Gastrocnemius medialis (tissue), 4 donors: ENCODE measurements at regions of chrX and their contacts with region 1.

Region 1: DNA sequence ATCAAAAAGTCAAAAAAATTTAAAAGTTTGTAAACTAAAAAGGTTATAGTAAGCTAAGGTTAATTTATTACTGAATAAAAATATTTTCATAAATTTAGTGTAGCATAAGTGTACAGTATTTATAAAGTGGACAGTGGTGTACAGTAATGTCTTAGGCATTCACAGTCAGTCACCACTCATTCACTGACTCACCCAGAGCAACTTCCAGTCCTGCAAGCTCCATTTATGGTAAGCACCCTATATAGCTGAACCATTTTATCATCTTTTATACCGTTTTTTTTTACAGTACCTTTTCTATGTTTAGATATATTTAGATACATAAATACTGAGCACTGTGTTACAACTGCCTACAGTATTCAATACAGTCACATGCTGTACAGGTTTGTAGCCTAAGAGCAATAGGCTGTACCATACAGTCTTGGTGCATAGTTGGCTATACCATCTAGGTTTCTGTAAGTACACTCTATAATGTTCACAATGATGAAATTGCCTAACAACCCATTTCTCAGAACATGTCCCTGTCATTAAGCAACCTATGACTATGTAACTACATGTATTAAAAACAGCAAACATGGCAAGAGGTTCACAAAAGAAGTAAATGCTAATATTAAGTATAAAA is 18.6 kb downstream of the ACSL4 start:
- DNase-seq: no peak
- ATAC-seq: no peak
- H3K4me3 ChIP-seq: no peak overlapping the region
- H3K27ac ChIP-seq: no peak overlapping the region
- H3K4me1 ChIP-seq: peaks cover 2 to 12% of the 10 kb centered on the region in 2 donors
- H3K27me3 ChIP-seq: peaks cover 0 to 4% (median 0%) of the 10 kb centered on the region in 3 donors
- CTCF ChIP-seq: no peak
- POLR2A ChIP-seq: no peak

Region 2: GRCh38 chrX:109782994-109783700 is 68.7 kb after region 1 on chrX:
- in situ Hi-C with region 1: no loop called
- intact Hi-C with region 1: loop called (anchors 10 kb)
- DNase-seq: no peak
- ATAC-seq: no peak
- H3K4me3 ChIP-seq: no peak overlapping the region
- H3K27ac ChIP-seq: no peak overlapping the region
- H3K4me1 ChIP-seq: no peaks in the 10 kb centered on the region
- H3K27me3 ChIP-seq: no peaks in the 10 kb centered on the region
- CTCF ChIP-seq: no peak
- POLR2A ChIP-seq: no peak

Region 3: DNA sequence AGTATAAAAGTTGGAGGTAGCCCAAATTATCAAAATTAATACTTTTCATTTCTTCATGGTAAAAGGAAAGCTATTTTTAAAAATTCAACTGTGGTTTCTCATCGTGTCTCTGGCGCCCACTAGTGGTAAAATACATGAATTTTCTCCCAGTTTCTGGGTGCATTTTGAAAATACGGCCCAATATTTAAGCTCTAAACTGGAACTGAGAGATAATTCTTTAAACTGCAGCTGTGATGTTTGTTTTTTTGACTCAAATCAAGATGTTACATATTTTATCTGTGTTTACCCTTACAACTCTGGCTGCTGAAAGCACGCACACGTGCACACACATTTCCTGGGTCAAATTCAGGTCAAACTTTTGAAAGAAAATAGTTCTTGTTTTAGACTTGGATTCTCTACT is 142.5 kb after region 1 on chrX:
- in situ Hi-C with region 1: loop called (anchors 5 to 10 kb)
- intact Hi-C with region 1: loop called (anchors 2 kb)
- DNase-seq: no peak
- ATAC-seq: no peak
- H3K4me3 ChIP-seq: no peak overlapping the region
- H3K27ac ChIP-seq: peak overlapping the region in 2 of 4 donors; percentile 23 to 41
- H3K4me1 ChIP-seq: no peaks in the 10 kb centered on the region
- H3K27me3 ChIP-seq: no peaks in the 10 kb centered on the region
- CTCF ChIP-seq: peak; percentile 60 to 83 (median 65)
- POLR2A ChIP-seq: no peak

Region 4: DNA sequence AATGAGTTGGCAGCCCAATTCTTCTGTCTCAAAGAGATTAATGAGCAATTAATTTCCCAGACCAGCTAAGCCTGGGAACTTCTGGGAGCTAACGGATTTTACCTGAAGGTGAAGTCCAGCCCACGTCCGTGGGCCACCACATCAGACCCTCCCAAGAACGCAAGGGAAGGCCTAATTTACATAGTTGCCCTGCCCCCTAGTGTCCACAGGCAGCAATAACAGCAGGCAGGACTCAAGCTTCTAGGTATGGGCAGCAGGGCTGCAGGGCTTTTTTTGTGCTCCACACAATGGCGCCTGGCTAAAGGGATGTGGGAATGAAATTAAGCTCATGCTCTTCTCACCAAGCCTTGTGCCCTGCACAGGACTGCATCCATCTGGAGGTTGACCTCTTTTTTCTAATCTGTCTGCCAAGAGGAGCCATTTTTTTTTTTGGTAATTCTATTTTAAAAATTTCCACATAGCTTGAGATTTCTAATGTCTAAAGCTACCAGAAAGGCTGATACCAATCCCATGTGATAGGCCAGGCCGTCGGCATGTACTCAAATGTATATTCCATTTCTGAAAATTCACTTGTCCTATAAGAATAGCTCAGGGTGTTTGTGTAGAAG is 176.6 kb after region 1 on chrX:
- in situ Hi-C with region 1: loop called in 1 of 4 experiments (anchors 10 kb)
- intact Hi-C with region 1: loop called (anchors 5 kb)
- DNase-seq: peak; percentile 2 to 15
- ATAC-seq: no peak
- H3K4me3 ChIP-seq: no peak overlapping the region
- H3K27ac ChIP-seq: no peak overlapping the region
- H3K4me1 ChIP-seq: no peaks in the 10 kb centered on the region
- H3K27me3 ChIP-seq: peaks cover 0 to 4% (median 0%) of the 10 kb centered on the region in 3 donors
- CTCF ChIP-seq: peak; percentile 38 to 81 (median 55)
- POLR2A ChIP-seq: no peak